GM12878 (cell line): ENCODE measurements at regions of chr2 and their contacts with region 1.

Region 1: DNA sequence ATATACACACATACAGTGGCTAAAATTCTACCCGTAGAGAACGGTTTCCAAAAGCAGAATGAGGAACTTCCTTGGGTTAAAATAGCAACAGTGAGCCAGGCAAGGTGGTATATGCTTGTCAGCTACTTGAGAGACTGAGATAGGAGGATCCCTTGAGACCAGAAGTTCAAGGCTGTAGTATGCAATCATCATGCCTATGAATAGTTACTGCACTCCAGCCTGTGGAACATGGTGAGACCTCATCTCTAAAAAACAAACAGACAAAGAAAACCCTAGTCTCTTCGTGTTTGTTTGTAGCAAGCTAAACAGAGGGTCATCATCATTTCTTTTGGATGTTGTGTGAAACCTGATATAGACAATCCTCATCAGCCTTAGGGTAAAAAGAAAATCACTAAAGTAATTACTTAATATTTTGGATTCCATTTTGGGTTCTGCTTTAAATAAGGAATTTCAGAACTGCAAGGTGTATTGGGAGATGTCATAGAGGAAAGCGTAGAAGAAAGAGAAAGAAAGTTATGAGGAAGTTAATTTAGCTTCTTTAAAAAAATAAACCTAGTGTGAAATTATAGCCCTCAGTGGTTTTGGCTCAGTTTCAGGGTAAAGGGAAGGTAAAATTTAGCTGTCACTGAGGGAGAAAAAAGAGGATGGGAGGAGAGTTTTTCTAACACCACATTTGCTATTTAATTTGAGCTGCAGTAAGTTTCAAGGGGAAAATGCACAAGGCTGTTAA is 46.5 kb downstream of the PLEK start:
- DNase-seq: peak; percentile 84
- ATAC-seq: peak; percentile 95
- H3K4me3 ChIP-seq: peak overlapping the region; percentile 39
- H3K27ac ChIP-seq: peak overlapping the region; percentile 85
- H3K4me1 ChIP-seq: peaks cover 15% of the 10 kb centered on the region
- H3K27me3 ChIP-seq: no peaks in the 10 kb centered on the region; a peak in 1 of 4 replicates
- CTCF ChIP-seq: no peak
- EP300 ChIP-seq: peak in 1 of 2 experiments; percentile 41; a peak in 2 of 4 replicates
- POLR2A ChIP-seq: no peak
- RAD21 ChIP-seq: peak; percentile 22; the same call in 1 of the 2 replicates

Region 2: DNA sequence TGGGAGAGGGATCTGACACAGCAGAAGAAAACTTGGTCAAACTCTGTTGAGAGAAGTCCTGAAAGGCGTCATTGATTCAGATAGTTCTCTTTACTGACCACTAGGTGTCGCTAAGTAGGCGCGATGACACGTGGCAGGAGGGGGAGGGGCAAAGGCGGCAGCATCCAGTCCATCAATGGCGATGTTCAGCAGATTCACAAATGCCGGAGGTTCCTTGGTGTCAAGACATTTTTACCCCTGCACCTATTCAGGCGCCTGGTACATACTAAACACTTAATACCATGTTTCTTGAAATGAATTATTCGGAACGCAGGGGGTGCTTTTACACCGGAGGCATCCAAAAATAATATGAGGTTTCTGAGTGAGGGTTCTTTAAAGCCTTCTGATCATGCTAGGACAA is 49.5 kb before region 1 on chr2:
- CTCF ChIA-PET with region 1: interaction called, 5 read pairs
- POLR2A ChIA-PET with region 1: interaction called, 10 read pairs
- RAD21 ChIA-PET with region 1: interaction called, 22 read pairs
- SMC1A ChIA-PET with region 1: interaction called, 12 read pairs
- in situ Hi-C with region 1: no loop called
- intact Hi-C with region 1: no loop called
- DNase-seq: peak; percentile 78
- ATAC-seq: peak; percentile 54
- H3K4me3 ChIP-seq: peak overlapping the region; percentile 33; the same call in 1 of the 2 replicates
- H3K27ac ChIP-seq: peak overlapping the region; percentile 94
- H3K4me1 ChIP-seq: peaks cover 21% of the 10 kb centered on the region
- H3K27me3 ChIP-seq: no peaks in the 10 kb centered on the region
- CTCF ChIP-seq: peak; percentile 75 to 92 (median 81)
- EP300 ChIP-seq: peak; percentile 34 to 68; a peak in 1 of 4 replicates
- POLR2A ChIP-seq: peak; percentile 68
- RAD21 ChIP-seq: peak; percentile 97

Region 3: GRCh38 chr2:68368654-68369336 is 42.8 kb before region 1 on chr2:
- CTCF ChIA-PET with region 1: interaction called, 3 read pairs
- POLR2A ChIA-PET with region 1: interaction called, 11 read pairs
- RAD21 ChIA-PET with region 1: interaction called, 22 read pairs
- SMC1A ChIA-PET with region 1: interaction called, 12 read pairs
- in situ Hi-C with region 1: no loop called
- intact Hi-C with region 1: no loop called
- DNase-seq: no peak
- ATAC-seq: no peak; the same call in 1 of the 3 replicates
- H3K4me3 ChIP-seq: peak overlapping the region; percentile 84
- H3K27ac ChIP-seq: peak overlapping the region; percentile 94
- H3K4me1 ChIP-seq: peaks cover 18% of the 10 kb centered on the region
- H3K27me3 ChIP-seq: no peaks in the 10 kb centered on the region
- CTCF ChIP-seq: no peak
- EP300 ChIP-seq: no peak
- POLR2A ChIP-seq: no peak; the same call in 1 of the 2 replicates
- RAD21 ChIP-seq: no peak

Region 4: GRCh38 chr2:68379184-68379708 is 32.3 kb before region 1 on chr2:
- CTCF ChIA-PET with region 1: interaction called, 3 read pairs
- POLR2A ChIA-PET with region 1: interaction called, 8 read pairs
- RAD21 ChIA-PET with region 1: interaction called, 11 read pairs
- SMC1A ChIA-PET with region 1: interaction called, 207 read pairs
- in situ Hi-C with region 1: no loop called
- intact Hi-C with region 1: no loop called
- DNase-seq: no peak
- ATAC-seq: peak; percentile 55
- H3K4me3 ChIP-seq: peak overlapping the region; percentile 48; the same call in 1 of the 2 replicates
- H3K27ac ChIP-seq: peak overlapping the region; percentile 80
- H3K4me1 ChIP-seq: peaks cover 71% of the 10 kb centered on the region
- H3K27me3 ChIP-seq: no peaks in the 10 kb centered on the region
- CTCF ChIP-seq: no peak
- EP300 ChIP-seq: peak; percentile 60 to 73; a peak in 3 of 4 replicates
- POLR2A ChIP-seq: no peak
- RAD21 ChIP-seq: no peak

Region 5: DNA sequence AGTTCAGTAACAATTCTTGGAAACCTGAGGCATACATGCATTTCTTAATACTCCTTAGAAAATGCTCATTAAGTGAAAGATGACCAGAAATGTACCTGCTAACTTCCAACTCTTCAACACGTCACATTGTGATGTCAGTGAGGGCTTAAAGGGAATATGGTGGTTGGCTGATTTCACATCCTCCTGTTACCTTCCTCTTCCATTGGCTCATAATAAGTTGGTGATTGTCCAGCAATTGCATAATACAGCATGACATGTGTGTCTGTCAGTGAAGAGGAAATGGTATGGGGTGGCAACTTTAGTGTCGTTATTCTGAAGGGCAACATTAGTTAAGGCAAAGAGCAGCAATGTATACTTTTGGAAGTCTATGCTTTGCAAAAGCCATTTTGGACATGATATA is 20.5 kb before region 1 on chr2:
- CTCF ChIA-PET with region 1: interaction called, 17 read pairs
- POLR2A ChIA-PET with region 1: interaction called, 17 read pairs
- RAD21 ChIA-PET with region 1: interaction called, 32 read pairs
- SMC1A ChIA-PET with region 1: interaction called, 207 read pairs
- in situ Hi-C with region 1: no loop called
- intact Hi-C with region 1: no loop called
- DNase-seq: no peak
- ATAC-seq: no peak
- H3K4me3 ChIP-seq: peak overlapping the region; percentile 62
- H3K27ac ChIP-seq: peak overlapping the region; percentile 90
- H3K4me1 ChIP-seq: peaks cover 37% of the 10 kb centered on the region
- H3K27me3 ChIP-seq: no peaks in the 10 kb centered on the region
- CTCF ChIP-seq: no peak
- EP300 ChIP-seq: no peak
- POLR2A ChIP-seq: 0 out of 2 replicates have a peak, but pooled peaks have one; percentile 16
- RAD21 ChIP-seq: no peak

Region 6: GRCh38 chr2:68423966-68424650 is 12.5 kb after region 1 on chr2:
- CTCF ChIA-PET with region 1: interaction called, 16 read pairs
- POLR2A ChIA-PET with region 1: interaction called, 9 read pairs
- RAD21 ChIA-PET with region 1: interaction called, 17 read pairs
- SMC1A ChIA-PET with region 1: interaction called, 140 read pairs
- in situ Hi-C with region 1: no loop called
- intact Hi-C with region 1: loop called (anchors 1 kb)
- DNase-seq: peak; percentile 98
- ATAC-seq: peak; percentile 85
- H3K4me3 ChIP-seq: peak overlapping the region; percentile 18; the same call in 1 of the 2 replicates
- H3K27ac ChIP-seq: peak overlapping the region; percentile 88
- H3K4me1 ChIP-seq: peaks cover 64% of the 10 kb centered on the region
- H3K27me3 ChIP-seq: no peaks in the 10 kb centered on the region
- CTCF ChIP-seq: no peak
- EP300 ChIP-seq: peak; percentile 91 to 92
- POLR2A ChIP-seq: no peak
- RAD21 ChIP-seq: peak; percentile 18; the same call in 1 of the 2 replicates

Region 7: GRCh38 chr2:68435615-68436014 is 24.1 kb after region 1 on chr2:
- CTCF ChIA-PET with region 1: interaction called, 87 read pairs
- POLR2A ChIA-PET with region 1: interaction called, 70 read pairs
- RAD21 ChIA-PET with region 1: interaction called, 147 read pairs
- SMC1A ChIA-PET with region 1: interaction called, 164 read pairs
- in situ Hi-C with region 1: no loop called
- intact Hi-C with region 1: no loop called
- DNase-seq: no peak
- ATAC-seq: no peak
- H3K4me3 ChIP-seq: no peak overlapping the region
- H3K27ac ChIP-seq: no peak overlapping the region
- H3K4me1 ChIP-seq: peaks cover 24% of the 10 kb centered on the region
- H3K27me3 ChIP-seq: no peaks in the 10 kb centered on the region
- CTCF ChIP-seq: no peak
- EP300 ChIP-seq: no peak
- POLR2A ChIP-seq: no peak
- RAD21 ChIP-seq: no peak